HCT116 (cell line): ENCODE measurements at regions of chr1 and their contacts with region 1.

Region 1: GRCh38 chr1:12067900-12068821 is 5.1 kb downstream of the TNFRSF8 start:
- DNase-seq: no peak
- ATAC-seq: no peak
- H3K4me3 ChIP-seq: no peak overlapping the region
- H3K27ac ChIP-seq: no peak overlapping the region
- H3K4me1 ChIP-seq: 0 out of 4 replicates have a peak, but pooled peaks cover 3 to 4% of the 10 kb centered on the region in 2 experiments
- H3K27me3 ChIP-seq: peaks cover 5% of the 10 kb centered on the region
- CTCF ChIP-seq: no peak
- POLR2A ChIP-seq: no peak
- RAD21 ChIP-seq: no peak

Region 2: DNA sequence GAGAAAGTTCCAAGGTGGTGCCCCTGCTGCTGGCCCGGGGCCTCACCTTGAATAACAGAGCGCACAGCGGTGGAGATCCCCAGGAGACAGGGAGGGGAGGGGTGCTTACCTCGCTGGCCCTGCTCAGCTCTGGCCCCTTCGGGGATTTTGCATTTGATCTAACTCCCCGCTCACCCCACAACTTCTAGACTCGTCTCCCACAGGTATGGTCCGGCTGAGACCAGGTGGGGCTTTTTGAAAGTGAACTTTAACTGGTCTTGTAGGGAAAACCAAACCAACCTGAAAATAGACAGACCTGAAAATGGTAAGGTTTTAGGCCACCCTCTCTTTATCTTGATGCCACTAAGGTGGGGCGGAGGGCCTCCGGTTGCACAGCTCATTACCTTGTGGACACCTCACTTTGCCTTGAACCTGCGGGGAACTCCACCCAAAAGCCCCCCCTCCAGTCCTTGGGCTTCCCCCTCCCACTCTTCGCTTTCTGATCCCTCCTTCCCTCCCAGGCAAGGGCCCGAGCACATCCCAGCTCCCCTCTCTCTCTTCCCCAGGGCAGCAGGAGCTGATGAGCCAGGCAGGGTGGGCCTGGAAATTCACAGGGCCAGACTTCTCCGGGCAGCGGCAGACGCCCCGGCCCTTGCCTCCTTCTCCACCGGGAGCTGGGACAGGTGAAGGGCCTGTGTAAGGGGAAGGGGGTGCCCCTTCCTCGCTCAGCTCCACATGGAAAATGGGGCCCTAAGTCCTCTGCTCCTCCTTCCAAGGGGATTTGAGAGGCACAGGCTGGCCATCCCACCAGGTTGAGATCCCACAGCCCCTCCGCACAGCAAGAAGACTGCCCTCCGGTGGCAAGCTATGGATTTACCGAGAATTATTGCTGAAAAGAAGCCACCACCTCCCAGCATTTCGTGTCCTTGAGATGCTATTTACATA is 11.0 kb after region 1 on chr1:
- CTCF ChIA-PET with region 1: interaction called, 11 read pairs
- POLR2A ChIA-PET with region 1: no interaction called
- RAD21 ChIA-PET with region 1: no interaction called
- intact Hi-C with region 1: no loop called
- DNase-seq: peak; percentile 27
- ATAC-seq: peak; percentile 71
- H3K4me3 ChIP-seq: no peak overlapping the region
- H3K27ac ChIP-seq: no peak overlapping the region
- H3K4me1 ChIP-seq: peaks cover 0 to 16% of the 10 kb centered on the region in 2 experiments; a peak in 1 of 4 replicates
- H3K27me3 ChIP-seq: no peaks in the 10 kb centered on the region
- CTCF ChIP-seq: peak; percentile 55 to 70 (median 62)
- POLR2A ChIP-seq: no peak
- RAD21 ChIP-seq: peak; percentile 65

Region 3: GRCh38 chr1:12184008-12184681 is 116.0 kb after region 1 on chr1:
- CTCF ChIA-PET with region 1: no interaction called
- POLR2A ChIA-PET with region 1: no interaction called
- RAD21 ChIA-PET with region 1: no interaction called
- intact Hi-C with region 1: no loop called
- DNase-seq: no peak
- ATAC-seq: no peak
- H3K4me3 ChIP-seq: no peak overlapping the region
- H3K27ac ChIP-seq: no peak overlapping the region
- H3K4me1 ChIP-seq: peaks cover 5 to 22% of the 10 kb centered on the region in 2 experiments; a peak in 3 of 4 replicates
- H3K27me3 ChIP-seq: no peaks in the 10 kb centered on the region
- CTCF ChIP-seq: no peak
- POLR2A ChIP-seq: no peak
- RAD21 ChIP-seq: no peak